ENCODE measurements at regions of chr2 and their contacts with region 1.

Region 1: GRCh38 chr2:174634130-174635014 is 36.8 kb upstream of the WIPF1 start:
- H3K4me3 Mint-ChIP-seq: peak overlapping the region; percentile 82
- H3K27ac Mint-ChIP-seq: peak overlapping the region; percentile 92
- H3K4me1 Mint-ChIP-seq: peaks cover 63% of the 10 kb centered on the region
- H3K27me3 Mint-ChIP-seq: no peaks in the 10 kb centered on the region

Region 2: DNA sequence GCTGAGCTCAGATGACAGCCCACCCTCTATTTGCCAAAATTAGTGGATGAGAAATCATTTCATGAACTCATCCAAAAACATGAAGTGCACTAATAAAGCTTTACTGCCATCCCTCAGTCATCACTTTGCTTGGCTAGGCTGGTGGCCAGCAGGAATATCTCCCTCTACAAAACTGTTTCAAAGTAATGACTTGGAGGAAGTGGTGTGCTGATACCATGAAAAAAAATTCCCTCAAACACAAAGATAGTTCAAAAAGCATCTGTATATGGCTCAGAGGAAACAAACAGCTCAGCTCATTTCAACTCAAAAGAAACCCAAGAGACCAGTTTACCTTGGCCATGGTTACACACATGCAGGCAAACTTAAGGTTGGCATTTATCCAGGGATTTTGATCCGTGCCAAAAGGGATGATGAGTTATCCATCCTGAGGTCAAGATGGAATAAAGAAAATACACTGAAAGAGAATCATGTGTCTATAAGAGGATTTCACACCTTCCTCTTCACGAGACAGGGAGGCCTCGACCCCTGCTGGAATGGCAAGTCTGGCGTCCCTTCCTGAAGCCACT is 18.4 kb before region 1 on chr2:
- intact Hi-C with region 1: loop called (anchors 2 kb)
- H3K4me3 Mint-ChIP-seq: no peak overlapping the region
- H3K27ac Mint-ChIP-seq: peak overlapping the region; percentile 75
- H3K4me1 Mint-ChIP-seq: peaks cover 73% of the 10 kb centered on the region
- H3K27me3 Mint-ChIP-seq: no peaks in the 10 kb centered on the region

Region 3: GRCh38 chr2:174663550-174663949 is 29.2 kb after region 1 on chr2:
- intact Hi-C with region 1: loop called (anchors 2 kb)
- H3K4me3 Mint-ChIP-seq: peak overlapping the region; percentile 71
- H3K27ac Mint-ChIP-seq: peak overlapping the region; percentile 97
- H3K4me1 Mint-ChIP-seq: peaks cover 89% of the 10 kb centered on the region
- H3K27me3 Mint-ChIP-seq: no peaks in the 10 kb centered on the region

Region 4: GRCh38 chr2:174688079-174688478 is 53.7 kb after region 1 on chr2:
- intact Hi-C with region 1: loop called (anchors 5 kb)
- H3K4me3 Mint-ChIP-seq: no peak overlapping the region
- H3K27ac Mint-ChIP-seq: no peak overlapping the region
- H3K4me1 Mint-ChIP-seq: peaks cover 48% of the 10 kb centered on the region
- H3K27me3 Mint-ChIP-seq: peaks cover 17% of the 10 kb centered on the region